Calu3 (cell line): ENCODE measurements at regions of chr18 and their contacts with region 1.

Region 1: DNA sequence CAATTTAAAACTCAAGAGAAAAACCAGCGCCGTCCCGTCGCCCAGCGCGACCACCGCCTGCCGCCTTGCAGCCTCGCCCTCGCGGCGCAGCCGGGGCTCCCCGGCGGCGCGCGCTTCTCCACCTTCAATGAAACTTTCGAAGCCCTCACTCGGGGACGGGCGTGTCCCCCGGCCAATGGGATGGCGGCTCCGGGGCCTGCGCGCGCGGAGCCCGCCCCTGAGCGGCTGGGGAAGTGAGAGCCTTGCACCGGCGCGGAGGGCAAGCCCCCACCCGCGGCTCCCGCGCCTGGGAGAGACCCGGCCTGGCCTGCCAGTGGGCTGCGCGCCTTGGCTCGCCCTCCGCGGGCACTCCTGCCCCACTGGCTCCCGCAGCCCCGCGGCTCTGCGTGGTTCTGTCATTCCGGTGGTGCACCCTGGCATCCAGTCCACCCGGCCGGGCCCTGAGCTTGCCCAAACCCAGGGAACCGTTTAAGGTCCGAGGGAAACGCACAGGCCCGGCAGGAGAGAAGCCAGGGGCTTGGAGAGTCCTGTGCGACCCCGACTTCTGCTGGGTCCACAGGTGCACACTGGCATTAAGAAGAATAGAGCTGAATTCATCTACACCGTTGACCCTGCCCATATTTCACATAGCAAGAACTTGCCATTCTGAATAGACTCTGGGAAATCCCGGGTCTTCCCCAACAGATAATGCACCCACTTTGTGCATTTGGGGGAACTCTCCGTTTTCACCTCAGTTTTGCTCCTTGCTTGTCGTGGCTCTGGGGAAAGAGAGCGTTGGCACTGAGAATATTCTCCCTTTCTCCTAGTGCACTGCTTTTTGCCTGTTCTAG is at the start of gene PIEZO2:
- DNase-seq: no peak
- H3K4me3 Mint-ChIP-seq: no peak within 1 kb of the TSS
- H3K27ac Mint-ChIP-seq: no peak within 1 kb of the TSS
- H3K4me1 Mint-ChIP-seq: no peaks in the 10 kb centered on the region
- H3K27me3 Mint-ChIP-seq: peaks cover 22% of the 10 kb centered on the region
- CTCF ChIP-seq: no peak
- total RNA-seq, gene PIEZO2: 0.24 and 0.91 TPM in 2 replicates

Region 2: GRCh38 chr18:10560450-10561045 is 589.1 kb before region 1 on chr18:
- CTCF ChIA-PET with region 1: interaction called, 19 read pairs
- intact Hi-C with region 1: loop called (anchors 1 kb)
- DNase-seq: peak; percentile 79
- H3K4me3 Mint-ChIP-seq: no peak overlapping the region
- H3K27ac Mint-ChIP-seq: no peak overlapping the region
- H3K4me1 Mint-ChIP-seq: no peaks in the 10 kb centered on the region
- H3K27me3 Mint-ChIP-seq: no peaks in the 10 kb centered on the region
- CTCF ChIP-seq: peak; percentile 78

Region 3: DNA sequence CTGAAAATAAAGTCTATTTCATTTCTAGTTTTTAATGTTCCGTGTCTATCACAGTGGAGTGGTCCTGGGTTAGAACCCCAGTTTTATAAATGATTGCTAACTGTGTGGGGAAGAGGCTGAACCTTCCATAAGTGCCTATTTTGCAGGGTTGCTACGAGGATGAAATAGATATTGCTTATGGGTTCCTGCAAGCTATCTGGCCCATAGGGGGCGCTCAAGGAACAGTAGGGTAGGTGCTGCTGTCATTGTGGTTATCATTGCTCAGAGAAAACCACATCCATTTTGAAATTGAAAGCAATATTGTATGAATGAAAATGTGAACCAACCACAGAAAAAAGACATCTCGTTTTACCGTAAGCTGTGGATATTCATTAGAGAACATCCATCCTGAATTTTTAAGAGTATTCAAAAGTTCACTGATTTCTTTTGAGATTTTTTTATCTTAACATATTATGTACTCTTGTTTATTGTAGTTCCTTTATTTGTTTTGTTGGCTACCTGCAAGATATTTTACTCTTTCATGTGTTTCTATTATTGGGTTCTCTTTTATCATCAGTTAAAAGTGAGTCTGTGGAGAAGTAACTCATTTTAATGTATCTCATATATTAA is 362.3 kb before region 1 on chr18:
- CTCF ChIA-PET with region 1: interaction called, 8 read pairs
- intact Hi-C with region 1: loop called (anchors 1 kb)
- DNase-seq: peak; percentile 92
- H3K4me3 Mint-ChIP-seq: no peak overlapping the region
- H3K27ac Mint-ChIP-seq: no peak overlapping the region
- H3K4me1 Mint-ChIP-seq: no peaks in the 10 kb centered on the region
- H3K27me3 Mint-ChIP-seq: peaks cover 27% of the 10 kb centered on the region
- CTCF ChIP-seq: peak; percentile 66

Region 4: GRCh38 chr18:10851824-10852319 is 297.8 kb before region 1 on chr18:
- CTCF ChIA-PET with region 1: interaction called, 33 read pairs
- intact Hi-C with region 1: loop called (anchors 1 kb)
- DNase-seq: no peak
- H3K4me3 Mint-ChIP-seq: no peak overlapping the region
- H3K27ac Mint-ChIP-seq: no peak overlapping the region
- H3K4me1 Mint-ChIP-seq: peaks cover 16% of the 10 kb centered on the region
- H3K27me3 Mint-ChIP-seq: no peaks in the 10 kb centered on the region
- CTCF ChIP-seq: peak; percentile 46

Region 5: GRCh38 chr18:11040823-11041656 is 108.6 kb before region 1 on chr18:
- CTCF ChIA-PET with region 1: interaction called, 3 read pairs
- intact Hi-C with region 1: loop called (anchors 5 kb)
- DNase-seq: peak; percentile 69
- H3K4me3 Mint-ChIP-seq: no peak overlapping the region
- H3K27ac Mint-ChIP-seq: no peak overlapping the region
- H3K4me1 Mint-ChIP-seq: peaks cover 37% of the 10 kb centered on the region
- H3K27me3 Mint-ChIP-seq: no peaks in the 10 kb centered on the region
- CTCF ChIP-seq: peak; percentile 75